Upper lobe of right lung (tissue), 1 donor: ENCODE measurements at regions of chr12 and their contacts with region 1.

Region 1: GRCh38 chr12:49515266-49515665 is 23.6 kb upstream of the KCNH3 start:
- DNase-seq: no peak
- ATAC-seq: no peak
- H3K4me3 ChIP-seq: no peak overlapping the region
- H3K27ac ChIP-seq: no peak overlapping the region
- H3K4me1 ChIP-seq: no peaks in the 10 kb centered on the region
- H3K27me3 ChIP-seq: no peaks in the 10 kb centered on the region
- CTCF ChIP-seq: no peak

Region 2: GRCh38 chr12:49358483-49359141 is 156.7 kb before region 1 on chr12:
- intact Hi-C with region 1: loop called (anchors 5 kb)
- DNase-seq: peak; percentile 13
- ATAC-seq: peak; percentile 94
- H3K4me3 ChIP-seq: no peak overlapping the region
- H3K27ac ChIP-seq: no peak overlapping the region
- H3K4me1 ChIP-seq: peaks cover 5% of the 10 kb centered on the region
- H3K27me3 ChIP-seq: peaks cover 8% of the 10 kb centered on the region
- CTCF ChIP-seq: peak; percentile 75